ENCODE measurements at regions of chr7 and their contacts with region 1.

Region 1: GRCh38 chr7:17298207-17298839 is at the start of gene AHR:
- DNase-seq: peak; percentile 81 to 94 (median 84)
- H3K4me3 ChIP-seq: peak within 1 kb of the TSS; percentile 90 to 93
- H3K4me3 Mint-ChIP-seq: peak within 1 kb of the TSS; percentile 92 to 100 (median 96)
- H3K27ac ChIP-seq: peak within 1 kb of the TSS; percentile 90
- H3K27ac Mint-ChIP-seq: peak within 1 kb of the TSS; percentile 86 to 100 (median 95)
- H3K4me1 ChIP-seq: peaks cover 43% of the 10 kb centered on the region
- H3K4me1 Mint-ChIP-seq: peaks cover 25 to 36% (median 27%) of the 10 kb centered on the region in 4 donors
- H3K27me3 ChIP-seq: no peaks in the 10 kb centered on the region
- H3K27me3 Mint-ChIP-seq: no peaks in the 10 kb centered on the region
- total RNA-seq, gene AHR: 35.2 to 38.8 TPM

Region 2: GRCh38 chr7:16982640-16983350 is 315.5 kb before region 1 on chr7:
- CTCF ChIA-PET with region 1: interaction called, 21 read pairs
- POLR2A ChIA-PET with region 1: interaction called, 4 read pairs
- intact Hi-C with region 1: loop called (anchors 1 kb)
- DNase-seq: peak; percentile 37 to 51 (median 42)
- H3K4me3 ChIP-seq: no peak overlapping the region
- H3K4me3 Mint-ChIP-seq: peak overlapping the region in 6 of 8 donors; percentile 10 to 73 (median 43)
- H3K27ac ChIP-seq: no peak overlapping the region
- H3K27ac Mint-ChIP-seq: peak overlapping the region in 3 of 7 donors; percentile 4 to 25 (median 11)
- H3K4me1 ChIP-seq: no peaks in the 10 kb centered on the region
- H3K4me1 Mint-ChIP-seq: peaks cover 0 to 3% (median 1%) of the 10 kb centered on the region in 4 donors
- H3K27me3 ChIP-seq: no peaks in the 10 kb centered on the region
- H3K27me3 Mint-ChIP-seq: peaks cover 2 to 5% of the 10 kb centered on the region in 2 donors

Region 3: GRCh38 chr7:17063045-17063383 is 235.3 kb before region 1 on chr7:
- CTCF ChIA-PET with region 1: interaction called, 23 read pairs
- POLR2A ChIA-PET with region 1: interaction called, 9 read pairs
- intact Hi-C with region 1: loop called (anchors 1 kb)
- DNase-seq: peak in 3 of 5 donors; percentile 3 to 32 (median 13)
- H3K4me3 ChIP-seq: no peak overlapping the region
- H3K4me3 Mint-ChIP-seq: no peak overlapping the region
- H3K27ac ChIP-seq: no peak overlapping the region
- H3K27ac Mint-ChIP-seq: no peak overlapping the region
- H3K4me1 ChIP-seq: no peaks in the 10 kb centered on the region
- H3K4me1 Mint-ChIP-seq: no peaks in the 10 kb centered on the region
- H3K27me3 ChIP-seq: no peaks in the 10 kb centered on the region
- H3K27me3 Mint-ChIP-seq: no peaks in the 10 kb centered on the region

Region 4: GRCh38 chr7:17144322-17144721 is 154.0 kb before region 1 on chr7:
- CTCF ChIA-PET with region 1: interaction called, 5 read pairs
- POLR2A ChIA-PET with region 1: interaction called, 67 read pairs
- intact Hi-C with region 1: loop called (anchors 2 kb)
- DNase-seq: peak; percentile 32 to 85 (median 36)
- H3K4me3 ChIP-seq: peak overlapping the region in 1 of 2 donors; percentile 27
- H3K4me3 Mint-ChIP-seq: peak overlapping the region in 7 of 8 donors; percentile 59 to 83 (median 78)
- H3K27ac ChIP-seq: no peak overlapping the region
- H3K27ac Mint-ChIP-seq: peak overlapping the region; percentile 36 to 90 (median 82)
- H3K4me1 ChIP-seq: peaks cover 58% of the 10 kb centered on the region
- H3K4me1 Mint-ChIP-seq: peaks cover 37 to 51% (median 40%) of the 10 kb centered on the region in 4 donors
- H3K27me3 ChIP-seq: no peaks in the 10 kb centered on the region
- H3K27me3 Mint-ChIP-seq: no peaks in the 10 kb centered on the region

Region 5: GRCh38 chr7:17646253-17646956 is 348.1 kb after region 1 on chr7:
- CTCF ChIA-PET with region 1: interaction called, 3 read pairs
- POLR2A ChIA-PET with region 1: no interaction called
- intact Hi-C with region 1: loop called (anchors 5 kb)
- DNase-seq: no peak
- H3K4me3 ChIP-seq: no peak overlapping the region
- H3K4me3 Mint-ChIP-seq: no peak overlapping the region
- H3K27ac ChIP-seq: no peak overlapping the region
- H3K27ac Mint-ChIP-seq: no peak overlapping the region
- H3K4me1 ChIP-seq: no peaks in the 10 kb centered on the region
- H3K4me1 Mint-ChIP-seq: no peaks in the 10 kb centered on the region
- H3K27me3 ChIP-seq: no peaks in the 10 kb centered on the region
- H3K27me3 Mint-ChIP-seq: peaks cover 9 to 13% of the 10 kb centered on the region in 2 donors